Aorta (tissue), 5 donors: ENCODE measurements at regions of chr1 and their contacts with region 1.

Region 1: DNA sequence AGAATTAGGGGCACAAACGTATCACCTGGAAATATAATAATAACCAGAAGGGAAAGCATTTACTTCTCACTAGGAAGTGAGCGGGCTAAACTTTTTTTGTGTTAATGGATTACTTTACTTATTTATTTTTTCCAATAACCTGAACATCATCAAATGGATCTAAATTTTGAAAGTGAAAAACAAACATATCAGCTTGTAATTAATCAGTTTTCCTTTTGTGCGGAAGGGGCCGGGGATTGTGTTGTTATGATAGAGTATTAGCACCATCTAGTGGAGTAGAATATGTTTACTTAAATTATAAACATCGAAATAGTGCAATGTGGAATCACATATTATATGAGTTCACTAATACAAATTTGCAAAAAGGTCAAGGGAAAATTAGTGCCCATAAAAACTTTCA is 9.0 kb downstream of the CFH start:
- DNase-seq: no peak
- ATAC-seq: peak; percentile 81
- H3K4me3 ChIP-seq: no peak overlapping the region
- H3K27ac ChIP-seq: no peak overlapping the region
- H3K4me1 ChIP-seq: no peaks in the 10 kb centered on the region
- H3K27me3 ChIP-seq: no peaks in the 10 kb centered on the region

Region 2: GRCh38 chr1:196148367-196148970 is 512.4 kb before region 1 on chr1:
- intact Hi-C with region 1: loop called (anchors 5 kb)
- DNase-seq: no peak
- ATAC-seq: no peak
- H3K4me3 ChIP-seq: no peak overlapping the region
- H3K27ac ChIP-seq: no peak overlapping the region
- H3K4me1 ChIP-seq: no peaks in the 10 kb centered on the region
- H3K27me3 ChIP-seq: no peaks in the 10 kb centered on the region

Region 3: DNA sequence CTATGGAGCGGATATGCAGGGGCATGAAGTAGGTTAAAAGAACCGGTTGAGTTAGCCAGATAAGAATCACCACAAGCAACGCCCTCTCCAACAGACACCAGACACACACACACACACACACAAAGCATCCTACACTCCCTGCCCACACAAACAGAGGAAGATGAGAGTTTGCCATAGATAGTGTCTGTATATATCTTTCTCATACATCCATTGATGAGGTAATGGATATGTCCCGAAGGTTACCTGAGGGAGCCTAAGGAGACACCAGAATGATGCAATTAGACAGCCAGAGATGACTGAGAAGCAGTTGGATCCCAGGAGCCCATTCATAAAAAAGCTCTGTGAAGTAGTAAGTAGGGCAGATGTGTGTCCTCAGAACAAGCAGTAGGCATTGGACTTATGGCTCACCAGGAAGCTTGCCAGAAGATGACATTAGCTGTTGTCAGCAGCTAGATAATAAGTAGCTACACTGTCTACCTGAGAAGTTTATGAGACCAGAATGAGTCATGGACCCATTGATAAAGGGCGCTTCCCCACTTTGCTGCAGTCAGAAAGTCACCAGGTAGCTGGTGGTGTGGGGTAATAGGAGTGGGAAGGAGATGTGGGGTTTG is 299.6 kb before region 1 on chr1:
- intact Hi-C with region 1: loop called in 1 of 2 experiments (anchors 5 kb)
- DNase-seq: no peak
- ATAC-seq: no peak
- H3K4me3 ChIP-seq: no peak overlapping the region
- H3K27ac ChIP-seq: no peak overlapping the region
- H3K4me1 ChIP-seq: no peaks in the 10 kb centered on the region
- H3K27me3 ChIP-seq: no peaks in the 10 kb centered on the region

Region 4: DNA sequence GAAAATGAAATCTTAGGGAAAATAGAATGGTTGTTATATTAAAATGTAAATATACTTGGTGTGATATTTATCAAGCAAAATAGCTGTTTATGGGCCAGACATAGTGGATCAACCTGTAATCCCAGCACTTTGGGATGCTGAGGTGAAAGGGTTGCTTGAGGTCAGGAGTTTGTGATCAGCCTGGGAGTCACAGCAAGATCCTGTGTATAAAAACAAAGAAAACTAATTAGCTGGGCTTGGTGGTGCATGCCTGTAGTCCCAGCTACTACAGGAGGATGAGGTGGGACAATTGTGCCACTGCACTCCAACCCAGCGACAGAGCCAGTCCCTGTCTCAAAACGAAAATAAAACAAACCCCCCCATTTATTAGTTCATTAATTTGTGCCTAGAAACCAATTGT is 137.0 kb after region 1 on chr1:
- intact Hi-C with region 1: no loop called
- DNase-seq: no peak
- ATAC-seq: no peak
- H3K4me3 ChIP-seq: no peak overlapping the region
- H3K27ac ChIP-seq: no peak overlapping the region
- H3K4me1 ChIP-seq: no peaks in the 10 kb centered on the region
- H3K27me3 ChIP-seq: no peaks in the 10 kb centered on the region